PC-9 (cell line): ENCODE measurements at regions of chr7 and their contacts with region 1.

Region 1: GRCh38 chr7:131370523-131370968 is 42.9 kb downstream of the MKLN1 start:
- DNase-seq: peak; percentile 57 to 68
- H3K4me3 ChIP-seq: no peak overlapping the region
- H3K27ac ChIP-seq: peak overlapping the region; percentile 43
- H3K4me1 ChIP-seq: peaks cover 29% of the 10 kb centered on the region
- H3K27me3 ChIP-seq: no peaks in the 10 kb centered on the region
- CTCF ChIP-seq: no peak

Region 2: GRCh38 chr7:131196803-131197202 is 173.7 kb before region 1 on chr7:
- CTCF ChIA-PET with region 1: no interaction called
- POLR2A ChIA-PET with region 1: no interaction called
- intact Hi-C with region 1: no loop called
- DNase-seq: no peak
- H3K4me3 ChIP-seq: no peak overlapping the region
- H3K27ac ChIP-seq: no peak overlapping the region
- H3K4me1 ChIP-seq: peaks cover 38% of the 10 kb centered on the region
- H3K27me3 ChIP-seq: no peaks in the 10 kb centered on the region
- CTCF ChIP-seq: no peak

Region 3: DNA sequence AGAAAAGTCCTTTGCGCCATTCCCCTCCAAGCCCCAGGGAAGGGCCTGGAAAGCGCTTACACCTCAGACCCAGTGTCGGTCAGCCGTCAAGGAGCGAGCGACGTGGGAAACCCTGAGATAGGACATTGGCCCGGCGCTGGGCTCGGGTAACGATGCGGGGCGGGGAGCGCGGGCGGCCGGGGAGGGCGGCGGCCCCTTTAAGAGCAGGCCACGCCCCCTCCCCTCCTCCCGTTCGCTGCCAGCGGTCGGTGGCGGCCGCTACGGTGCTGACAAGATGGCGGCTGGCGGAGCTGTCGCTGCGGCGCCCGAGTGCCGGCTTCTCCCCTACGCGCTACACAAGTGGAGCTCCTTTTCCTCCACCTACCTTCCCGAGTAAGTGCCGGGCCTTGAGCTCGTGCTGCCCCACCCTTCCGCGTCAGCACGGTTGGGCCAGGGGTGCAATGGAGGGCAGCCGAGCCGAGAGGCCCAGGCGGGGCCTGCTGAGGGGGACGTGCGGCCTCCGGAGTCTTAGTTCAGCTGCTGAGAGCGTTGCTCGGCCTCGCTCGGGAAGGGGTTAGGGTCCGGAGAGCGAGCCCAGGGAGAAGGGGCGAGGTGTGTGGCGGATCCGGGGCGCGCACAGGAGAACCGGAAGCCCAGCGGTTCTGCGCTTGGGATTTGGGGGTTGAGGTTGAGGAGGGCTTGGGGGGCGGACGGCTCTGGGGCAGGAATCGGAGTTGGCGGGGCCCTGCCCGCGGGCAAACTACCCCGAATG is 42.7 kb before region 1 on chr7 and contains the start of gene MKLN1:
- CTCF ChIA-PET with region 1: interaction called, 6 read pairs
- POLR2A ChIA-PET with region 1: no interaction called
- intact Hi-C with region 1: loop called (anchors 5 kb)
- DNase-seq: peak; percentile 75 to 91
- H3K4me3 ChIP-seq: peak within 1 kb of the TSS; percentile 91
- H3K27ac ChIP-seq: peak within 1 kb of the TSS; percentile 76
- H3K4me1 ChIP-seq: peaks cover 48% of the 10 kb centered on the region
- H3K27me3 ChIP-seq: no peaks in the 10 kb centered on the region
- CTCF ChIP-seq: no peak
- total RNA-seq, gene MKLN1: 60.1 and 61.1 TPM in 2 replicates

Region 4: DNA sequence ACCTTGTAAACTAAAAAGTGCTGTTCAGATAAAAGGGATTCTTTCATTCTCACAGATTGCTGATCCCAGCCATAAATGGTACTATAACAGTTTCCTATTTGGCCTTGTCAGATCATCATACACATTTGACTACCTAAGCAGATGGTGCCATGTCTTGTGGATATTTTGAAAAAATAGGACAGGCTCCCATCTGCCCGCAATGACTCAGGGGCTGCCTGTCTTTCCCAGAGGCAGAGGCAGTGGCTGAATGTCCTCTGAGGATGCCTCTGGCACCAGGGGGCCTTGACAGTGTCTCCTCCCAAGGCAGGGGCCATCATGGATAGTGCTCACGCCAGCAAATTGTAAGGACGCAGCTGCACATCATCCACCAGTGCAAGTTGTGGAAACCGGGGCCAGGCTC is 508.9 kb after region 1 on chr7:
- CTCF ChIA-PET with region 1: no interaction called
- POLR2A ChIA-PET with region 1: no interaction called
- intact Hi-C with region 1: no loop called
- DNase-seq: no peak
- H3K4me3 ChIP-seq: no peak overlapping the region
- H3K27ac ChIP-seq: no peak overlapping the region
- H3K4me1 ChIP-seq: no peaks in the 10 kb centered on the region
- H3K27me3 ChIP-seq: peaks cover 22% of the 10 kb centered on the region; the same call in 1 of the 2 replicates
- CTCF ChIP-seq: no peak